Activated T-helper 2 cell treated with anti-CD3 and anti-CD28 coated beads, Interferon-gamma antibody, Interleukin-2, Interleukin-4, amounts not matched to agents 10 μg/mL and 5 μg/mL and 100 μg/mL, durations not matched to agents 14 hours and 24 hours and 36 hours (primary cell): ENCODE measurements at regions of chr11 and their contacts with region 1.

Region 1: DNA sequence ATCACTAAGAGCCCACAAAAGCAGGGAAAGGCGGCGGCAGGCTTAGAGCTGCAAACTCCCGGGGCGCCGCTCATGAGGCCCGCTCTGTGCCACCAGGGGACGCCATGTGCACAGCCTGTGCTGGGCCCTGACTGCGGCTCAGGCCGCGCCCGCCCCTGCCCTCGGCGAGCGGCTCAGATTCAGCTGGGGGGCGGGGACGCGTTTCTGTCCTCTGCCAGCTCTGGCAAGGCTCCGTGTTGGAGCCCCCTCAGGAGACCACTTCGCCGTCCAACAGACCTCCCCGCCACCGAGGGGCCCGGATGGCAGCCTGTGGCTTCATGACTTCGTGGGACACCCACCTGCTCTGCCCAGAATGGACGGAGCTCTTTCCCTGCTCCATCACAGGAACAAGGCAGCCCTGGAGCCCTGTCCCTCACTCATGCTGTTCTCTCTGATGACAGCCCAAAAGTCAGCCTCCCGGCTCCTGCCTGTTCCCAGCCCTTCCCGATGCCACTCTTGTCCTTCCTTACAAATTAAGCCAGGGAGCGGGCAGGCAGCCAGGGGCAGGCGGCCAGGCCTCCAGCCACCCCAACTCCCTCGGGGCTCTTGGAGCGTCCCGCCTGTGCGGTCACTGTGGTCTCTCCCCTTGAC is 69.1 kb downstream of the NAT10 start:
- DNase-seq: peak; percentile 72
- H3K4me3 Mint-ChIP-seq: peak overlapping the region; percentile 62
- H3K27ac Mint-ChIP-seq: peak overlapping the region; percentile 49
- H3K4me1 Mint-ChIP-seq: peaks cover 46% of the 10 kb centered on the region
- H3K27me3 Mint-ChIP-seq: no peaks in the 10 kb centered on the region

Region 2: DNA sequence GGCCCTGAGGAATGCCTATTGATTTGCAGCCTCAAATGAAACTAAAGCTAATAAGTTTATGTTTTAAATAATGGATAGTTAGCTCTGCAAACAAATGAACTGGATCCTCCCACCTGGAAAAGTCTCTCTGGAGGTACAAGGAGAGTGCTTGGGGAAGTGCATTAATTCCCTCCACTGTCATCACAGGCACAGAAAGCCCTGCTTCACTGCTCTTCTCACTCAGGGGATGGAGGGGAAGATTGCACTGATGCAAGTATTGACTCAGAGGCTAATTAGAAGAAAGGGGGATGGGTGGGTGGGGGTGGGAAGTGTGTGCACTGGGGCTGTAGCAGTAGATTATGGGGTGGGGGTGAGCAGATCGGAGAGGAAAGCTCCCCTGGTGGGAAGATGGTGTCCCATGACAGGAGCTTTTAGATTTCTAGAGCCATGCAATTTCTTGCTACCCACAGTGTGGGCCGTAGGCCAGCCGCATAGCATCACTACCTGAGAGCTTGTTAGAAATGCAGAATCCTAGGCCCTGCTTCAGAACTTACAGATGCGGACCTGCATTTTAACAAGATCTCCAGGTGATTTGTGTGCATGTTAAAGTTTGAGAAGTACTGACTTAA is 753.5 kb before region 1 on chr11:
- intact Hi-C with region 1: no loop called
- DNase-seq: no peak
- H3K4me3 Mint-ChIP-seq: no peak overlapping the region
- H3K27ac Mint-ChIP-seq: no peak overlapping the region
- H3K4me1 Mint-ChIP-seq: no peaks in the 10 kb centered on the region
- H3K27me3 Mint-ChIP-seq: peaks cover 10% of the 10 kb centered on the region

Region 3: GRCh38 chr11:33959855-33960400 is 214.6 kb before region 1 on chr11:
- intact Hi-C with region 1: no loop called
- DNase-seq: no peak
- H3K4me3 Mint-ChIP-seq: no peak overlapping the region
- H3K27ac Mint-ChIP-seq: no peak overlapping the region
- H3K4me1 Mint-ChIP-seq: no peaks in the 10 kb centered on the region
- H3K27me3 Mint-ChIP-seq: peaks cover 21% of the 10 kb centered on the region

Region 4: GRCh38 chr11:33996498-33997454 is 177.8 kb before region 1 on chr11:
- intact Hi-C with region 1: loop called (anchors 2 kb)
- DNase-seq: peak; percentile 65
- H3K4me3 Mint-ChIP-seq: no peak overlapping the region
- H3K27ac Mint-ChIP-seq: no peak overlapping the region
- H3K4me1 Mint-ChIP-seq: peaks cover 9% of the 10 kb centered on the region
- H3K27me3 Mint-ChIP-seq: peaks cover 30% of the 10 kb centered on the region

Region 5: DNA sequence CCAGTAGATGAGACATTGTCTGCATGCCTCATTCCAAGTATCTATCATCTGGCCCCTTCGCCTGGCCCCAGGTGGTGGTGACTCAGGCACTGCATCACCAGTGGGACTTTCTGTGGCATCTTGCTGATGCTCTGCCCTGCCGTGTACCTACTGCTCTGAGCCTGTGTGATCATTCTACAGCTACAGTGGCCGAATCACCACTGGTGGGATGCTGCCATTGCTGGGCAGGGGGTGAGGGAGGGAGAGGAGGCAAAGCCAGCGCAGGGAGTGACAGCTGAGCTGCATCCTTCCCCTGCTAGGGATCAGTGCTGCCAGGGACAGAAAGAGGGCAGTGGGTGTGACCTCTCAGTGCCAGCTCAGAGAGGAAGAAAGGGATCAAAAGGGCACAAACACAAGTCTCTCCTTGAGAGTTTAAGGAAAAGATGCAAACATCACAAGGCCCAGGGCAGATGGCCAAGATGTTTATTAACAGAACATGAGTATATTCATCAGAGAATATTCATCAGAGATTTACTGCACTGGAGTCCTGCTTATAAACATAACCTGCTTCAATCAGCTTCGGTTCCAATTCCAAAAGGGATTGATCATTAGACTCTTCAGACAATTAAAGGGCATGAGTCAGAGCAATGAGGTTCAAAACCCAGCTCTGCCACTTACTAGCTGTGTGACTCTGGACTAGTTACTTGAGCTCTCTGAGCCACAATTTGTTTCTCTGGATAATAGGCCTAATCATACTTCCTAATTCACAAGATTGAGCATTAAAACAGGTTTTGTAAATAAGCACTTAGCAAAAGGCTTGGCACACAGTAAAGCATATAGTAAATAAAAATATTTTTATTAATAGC is 40.7 kb after region 1 on chr11:
- intact Hi-C with region 1: loop called (anchors 2 kb)
- DNase-seq: no peak
- H3K4me3 Mint-ChIP-seq: peak overlapping the region; percentile 6
- H3K27ac Mint-ChIP-seq: peak overlapping the region; percentile 84
- H3K4me1 Mint-ChIP-seq: peaks cover 27% of the 10 kb centered on the region
- H3K27me3 Mint-ChIP-seq: no peaks in the 10 kb centered on the region